ENCODE measurements at regions of chr15 and their contacts with region 1.

Region 1: DNA sequence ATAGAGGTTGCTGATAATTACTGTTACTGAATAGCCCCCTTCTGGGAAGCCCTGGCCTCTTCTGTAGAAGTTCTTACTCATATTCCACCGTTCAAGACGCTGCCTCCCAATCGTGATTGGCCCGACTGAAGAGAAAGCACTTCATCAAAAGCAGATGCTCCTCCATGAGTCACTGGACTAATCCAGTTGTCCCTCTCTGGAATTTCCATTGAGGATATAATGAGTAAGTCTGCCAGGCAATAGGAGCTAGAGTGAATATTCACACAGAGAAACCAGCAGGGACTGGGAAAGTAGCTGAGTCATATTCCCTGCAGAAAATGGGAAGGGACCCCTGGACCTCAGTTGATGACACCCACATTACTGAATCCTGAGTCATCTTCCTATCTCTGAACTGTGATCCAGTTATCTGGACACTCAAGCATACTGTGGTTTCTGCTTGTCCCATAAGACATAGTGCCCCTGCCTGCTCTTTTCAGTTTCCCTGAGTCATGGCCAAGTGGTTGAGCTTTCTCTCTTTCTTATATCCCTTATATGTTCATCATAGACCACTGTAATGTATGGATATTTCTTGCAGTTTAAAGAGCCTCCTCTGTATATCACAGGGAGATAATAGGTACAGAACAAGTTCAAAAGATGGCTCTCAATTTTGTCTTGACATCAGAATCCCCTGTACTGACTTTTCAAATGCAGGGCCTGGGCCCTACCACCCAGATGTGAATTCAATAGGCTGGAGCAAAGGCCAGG is 151.2 kb upstream of the CDIN1 start:
- DNase-seq: no peak
- ATAC-seq: no peak
- H3K4me3 ChIP-seq: no peak overlapping the region
- H3K27ac ChIP-seq: no peak overlapping the region
- H3K4me1 ChIP-seq: no peaks in the 10 kb centered on the region
- H3K27me3 ChIP-seq: no peaks in the 10 kb centered on the region
- CTCF ChIP-seq: no peak
- EP300 ChIP-seq: no peak
- POLR2A ChIP-seq: no peak
- RAD21 ChIP-seq: no peak

Region 2: GRCh38 chr15:36251450-36251849 is 176.8 kb before region 1 on chr15:
- CTCF ChIA-PET with region 1: no interaction called
- POLR2A ChIA-PET with region 1: no interaction called
- RAD21 ChIA-PET with region 1: no interaction called
- SMC1A ChIA-PET with region 1: no interaction called
- in situ Hi-C with region 1: no loop called
- intact Hi-C with region 1: no loop called
- DNase-seq: no peak
- ATAC-seq: no peak
- H3K4me3 ChIP-seq: no peak overlapping the region
- H3K27ac ChIP-seq: no peak overlapping the region
- H3K4me1 ChIP-seq: no peaks in the 10 kb centered on the region
- H3K27me3 ChIP-seq: no peaks in the 10 kb centered on the region
- CTCF ChIP-seq: no peak
- EP300 ChIP-seq: no peak
- POLR2A ChIP-seq: no peak
- RAD21 ChIP-seq: no peak

Region 3: GRCh38 chr15:36484038-36484778 is 55.9 kb after region 1 on chr15:
- CTCF ChIA-PET with region 1: no interaction called
- POLR2A ChIA-PET with region 1: no interaction called
- RAD21 ChIA-PET with region 1: no interaction called
- SMC1A ChIA-PET with region 1: no interaction called
- in situ Hi-C with region 1: no loop called
- intact Hi-C with region 1: loop called (anchors 10 kb)
- DNase-seq: no peak
- ATAC-seq: no peak
- H3K4me3 ChIP-seq: no peak overlapping the region
- H3K27ac ChIP-seq: no peak overlapping the region
- H3K4me1 ChIP-seq: no peaks in the 10 kb centered on the region
- H3K27me3 ChIP-seq: no peaks in the 10 kb centered on the region; a peak in 1 of 4 replicates
- CTCF ChIP-seq: no peak
- EP300 ChIP-seq: no peak
- POLR2A ChIP-seq: no peak
- RAD21 ChIP-seq: no peak

Measured in GM12878 (cell line).